Heart left ventricle (tissue), 16 donors: ENCODE measurements at regions of chr7 and their contacts with region 1.

Region 1: DNA sequence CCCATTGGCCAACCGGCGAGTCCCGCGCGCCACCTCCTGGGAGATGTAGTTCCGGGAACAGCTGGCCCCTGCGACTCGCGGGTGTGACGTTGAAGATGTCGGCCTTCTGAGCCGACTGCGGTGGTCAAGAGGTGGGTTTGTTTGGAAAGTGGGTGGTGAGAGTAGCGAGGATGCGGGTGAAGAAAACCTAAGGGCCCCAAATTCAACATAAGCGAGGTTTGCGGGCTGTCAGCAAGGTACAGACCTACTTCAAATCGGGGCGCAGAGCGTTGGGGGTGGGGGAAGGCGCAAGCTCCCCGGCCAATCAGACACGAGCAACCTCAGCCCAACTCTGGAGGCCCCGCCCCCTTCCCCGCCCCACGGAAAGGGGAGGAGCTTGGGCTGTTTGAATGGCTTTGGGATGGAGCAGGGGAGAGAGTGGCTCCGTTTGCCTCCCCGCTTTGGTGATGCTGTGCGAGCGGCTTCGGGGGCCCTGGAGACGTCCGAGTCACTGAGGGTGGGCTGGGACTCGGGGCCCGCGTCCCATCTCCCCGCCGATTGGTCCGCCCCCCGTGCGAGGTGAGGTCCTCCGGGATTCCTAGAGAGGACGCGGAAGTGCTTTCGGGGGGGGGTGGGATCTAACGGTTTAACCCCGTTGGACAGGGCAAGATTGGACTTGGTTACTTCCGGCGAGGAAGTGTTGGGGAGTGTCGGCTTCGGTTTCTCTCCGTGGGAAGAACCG is at the start of gene ZKSCAN5:
- DNase-seq: peak; percentile 99
- ATAC-seq: peak; percentile 93 to 96 (median 96)
- H3K4me3 ChIP-seq: peak within 1 kb of the TSS; percentile 65 to 91 (median 76)
- H3K27ac ChIP-seq: peak within 1 kb of the TSS; percentile 73 to 97 (median 94)
- H3K4me1 ChIP-seq: peaks cover 0 to 42% (median 33%) of the 10 kb centered on the region in 12 donors
- H3K27me3 ChIP-seq: no peaks in the 10 kb centered on the region
- CTCF ChIP-seq: peak in 4 of 12 donors; percentile 7 to 36 (median 16)
- POLR2A ChIP-seq: peak in 1 of 2 donors; percentile 56
- total RNA-seq, gene ZKSCAN5: 5.6 to 9.6 (median 7.1) TPM

Region 2: DNA sequence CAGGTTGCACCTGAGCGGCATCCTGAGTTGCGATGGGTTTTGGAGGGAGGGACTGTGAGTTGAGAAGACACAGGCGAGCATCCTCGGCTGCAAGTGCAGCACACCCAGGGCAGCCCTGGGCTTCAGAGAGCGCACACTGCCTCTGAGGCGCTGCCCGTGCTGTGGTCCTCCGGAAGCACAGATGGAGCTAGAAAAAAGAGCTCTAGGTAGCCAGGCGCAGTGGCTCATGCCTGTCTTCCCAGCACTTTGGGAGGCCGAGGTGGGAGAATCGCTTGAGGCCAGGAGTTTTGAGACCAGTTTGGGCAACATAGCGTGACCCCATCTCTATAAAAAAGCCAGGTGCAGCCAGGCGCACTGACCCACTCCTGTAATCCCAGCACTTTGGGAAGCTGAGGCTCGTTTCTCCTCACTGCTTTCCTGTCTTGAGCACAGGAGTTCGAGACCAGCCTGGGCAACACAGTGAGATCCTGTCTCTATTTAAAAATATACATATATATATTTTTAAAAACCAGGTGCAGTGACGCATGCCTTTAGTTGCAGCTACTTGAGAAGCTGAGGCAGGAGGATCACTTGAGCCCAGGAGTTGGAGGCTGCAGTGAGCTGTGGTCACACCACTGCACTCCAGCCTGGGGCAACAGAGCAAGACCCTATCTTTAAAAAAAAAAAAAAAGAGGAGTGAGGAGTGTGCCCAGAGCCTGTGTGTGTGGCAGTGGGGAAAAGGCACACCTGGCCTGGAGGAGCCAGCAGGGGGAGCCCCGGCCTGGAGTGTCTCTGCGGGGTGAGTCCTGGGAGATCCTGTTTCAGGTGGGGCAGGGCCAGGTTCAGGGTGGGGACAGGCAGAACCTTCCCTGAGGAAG is 139.6 kb before region 1 on chr7:
- intact Hi-C with region 1: no loop called
- DNase-seq: peak in 1 of 5 donors; percentile 48
- ATAC-seq: peak in 3 of 4 donors; percentile 63 to 66 (median 63)
- H3K4me3 ChIP-seq: no peak overlapping the region
- H3K27ac ChIP-seq: no peak overlapping the region
- H3K4me1 ChIP-seq: no peaks in the 10 kb centered on the region
- H3K27me3 ChIP-seq: no peaks in the 10 kb centered on the region
- CTCF ChIP-seq: peak in 11 of 12 donors; percentile 33 to 61 (median 53)
- POLR2A ChIP-seq: no peak

Region 3: DNA sequence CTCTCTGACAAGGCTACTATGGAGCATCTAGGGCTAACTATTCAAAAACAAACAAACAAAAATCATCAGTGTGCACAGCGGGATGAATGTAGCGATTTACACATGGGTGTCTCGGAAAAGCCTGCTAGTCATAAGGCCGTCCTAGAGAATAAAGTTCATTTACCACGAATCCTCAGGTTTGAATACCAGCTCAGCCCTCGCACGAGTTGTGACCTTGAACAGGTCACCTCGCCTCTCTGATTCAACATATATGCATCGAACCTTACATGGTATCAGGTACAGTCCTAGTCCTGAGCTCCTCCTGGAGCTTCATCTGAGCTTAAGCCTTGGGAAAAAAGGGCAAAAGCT is 39.4 kb before region 1 on chr7:
- intact Hi-C with region 1: loop called in 1 of 10 experiments (anchors 5 kb)
- DNase-seq: no peak
- ATAC-seq: peak in 2 of 4 donors; percentile 4 to 25
- H3K4me3 ChIP-seq: peak overlapping the region; percentile 64 to 96 (median 82)
- H3K27ac ChIP-seq: peak overlapping the region; percentile 77 to 96 (median 92)
- H3K4me1 ChIP-seq: peaks cover 8 to 58% (median 29%) of the 10 kb centered on the region in 12 donors
- H3K27me3 ChIP-seq: no peaks in the 10 kb centered on the region
- CTCF ChIP-seq: no peak
- POLR2A ChIP-seq: no peak

Region 4: GRCh38 chr7:99472561-99473243 is 32.1 kb before region 1 on chr7 and contains the start of gene ZNF789:
- intact Hi-C with region 1: loop called in 3 of 10 experiments (anchors 1 to 5 kb)
- DNase-seq: peak; percentile 98 to 99 (median 99)
- ATAC-seq: peak; percentile 98 to 99 (median 98)
- H3K4me3 ChIP-seq: peak within 1 kb of the TSS; percentile 63 to 96 (median 82)
- H3K27ac ChIP-seq: peak within 1 kb of the TSS; percentile 69 to 95 (median 86)
- H3K4me1 ChIP-seq: peaks cover 0 to 25% (median 10%) of the 10 kb centered on the region in 12 donors
- H3K27me3 ChIP-seq: no peaks in the 10 kb centered on the region
- CTCF ChIP-seq: peak in 1 of 12 donors; percentile 12
- POLR2A ChIP-seq: peak in 1 of 2 donors; percentile 59
- total RNA-seq, gene ZNF789: 2.1 to 5.2 (median 3.2) TPM

Region 5: DNA sequence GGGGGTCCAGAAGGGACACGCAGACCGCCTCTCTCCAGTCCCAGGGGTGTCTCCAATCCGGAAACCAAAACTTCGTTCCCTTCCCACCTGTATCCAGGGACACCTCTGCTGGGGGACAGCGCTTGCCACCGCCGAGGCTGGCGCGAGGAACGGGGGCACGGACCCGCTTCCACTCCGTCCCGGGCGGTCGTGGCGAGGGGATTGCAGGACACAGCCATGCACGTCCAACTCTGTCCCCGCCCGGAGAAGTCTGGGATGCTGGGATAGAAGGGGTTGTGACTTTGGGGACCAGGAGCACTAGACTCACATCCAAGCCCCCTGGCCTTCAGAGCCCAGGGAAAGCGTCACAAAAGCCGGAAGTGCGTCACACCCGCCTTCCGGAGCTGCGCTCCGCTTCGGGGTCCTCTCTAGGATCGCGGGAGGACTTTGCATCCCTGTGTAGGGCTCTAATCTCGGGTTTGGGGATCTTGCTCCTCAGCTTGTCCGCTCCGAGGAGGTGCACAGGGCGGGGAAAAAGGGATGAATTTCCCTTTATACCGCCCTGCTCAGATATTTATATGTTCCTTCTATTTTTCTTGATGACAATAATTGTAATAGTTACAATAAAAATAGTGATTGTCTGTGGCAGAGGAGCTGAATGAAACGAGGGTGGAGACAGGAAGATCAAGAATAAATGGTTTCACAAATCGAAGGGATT is 47.2 kb after region 1 on chr7 and contains the start of gene FAM200A:
- intact Hi-C with region 1: loop called in 8 of 10 experiments (anchors 5 to 10 kb)
- DNase-seq: peak; percentile 91 to 94 (median 93)
- ATAC-seq: peak; percentile 98 to 100 (median 98)
- H3K4me3 ChIP-seq: peak within 1 kb of the TSS; percentile 54 to 99 (median 83)
- H3K27ac ChIP-seq: peak within 1 kb of the TSS; percentile 6 to 95 (median 86)
- H3K4me1 ChIP-seq: peaks cover 0 to 26% (median 15%) of the 10 kb centered on the region in 12 donors
- H3K27me3 ChIP-seq: no peaks in the 10 kb centered on the region
- CTCF ChIP-seq: no peak
- POLR2A ChIP-seq: peak in 1 of 2 donors; percentile 72
- total RNA-seq, gene FAM200A: 4.7 to 7.1 (median 5.3) TPM

Region 6: GRCh38 chr7:99558306-99559174 is 53.8 kb after region 1 on chr7 and contains the start of gene ZNF655:
- intact Hi-C with region 1: loop called in 8 of 10 experiments (anchors 5 to 10 kb)
- DNase-seq: peak; percentile 93 to 95 (median 94)
- ATAC-seq: peak; percentile 96 to 98 (median 98)
- H3K4me3 ChIP-seq: peak within 1 kb of the TSS; percentile 58 to 99 (median 88)
- H3K27ac ChIP-seq: peak within 1 kb of the TSS; percentile 91 to 99 (median 96)
- H3K4me1 ChIP-seq: peaks cover 0 to 46% (median 23%) of the 10 kb centered on the region in 12 donors
- H3K27me3 ChIP-seq: no peaks in the 10 kb centered on the region
- CTCF ChIP-seq: peak in 2 of 12 donors; percentile 2 to 6
- POLR2A ChIP-seq: peak in 1 of 2 donors; percentile 70
- total RNA-seq, gene ZNF655: 26.8 to 48.0 (median 32.8) TPM

Region 7: DNA sequence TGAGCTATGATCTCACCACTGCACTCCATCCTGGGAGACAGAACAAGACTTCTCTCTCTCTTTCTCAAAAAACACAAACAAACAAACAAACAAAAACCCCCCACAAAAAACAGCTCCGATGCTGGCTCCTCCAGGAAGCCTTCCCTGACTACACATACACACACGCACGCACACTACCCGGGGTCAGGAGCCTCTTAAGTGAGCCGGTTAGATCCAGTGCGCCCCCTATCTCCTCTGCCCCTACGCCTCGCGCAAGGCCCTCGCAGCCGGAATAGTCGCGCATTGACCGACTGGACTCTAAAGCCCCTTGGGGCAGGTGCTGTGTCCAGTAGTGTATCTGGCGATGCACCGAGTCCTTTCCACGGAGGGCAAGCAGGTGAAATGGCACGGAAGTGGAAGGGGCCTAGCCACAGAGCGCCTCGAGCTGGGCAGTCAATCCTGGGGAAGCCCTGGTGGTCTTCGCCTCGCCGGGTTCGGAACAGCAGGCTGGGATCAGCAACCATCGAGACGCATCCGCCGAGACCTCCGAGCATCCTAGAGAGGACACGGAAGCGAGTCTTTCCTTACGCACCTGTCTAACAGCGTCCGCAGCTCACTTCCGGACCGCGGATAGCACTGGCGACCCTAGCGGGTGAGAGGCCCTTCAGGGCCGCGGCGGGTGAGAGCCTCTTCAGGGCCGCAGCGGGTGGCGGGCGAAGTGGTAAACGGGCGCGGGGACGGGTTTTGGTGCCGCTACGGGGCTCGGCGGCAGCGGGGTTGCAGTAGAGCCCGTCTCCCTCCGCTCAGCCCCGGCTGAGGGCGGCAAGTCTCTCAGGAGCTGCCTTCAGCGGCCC is 111.8 kb after region 1 on chr7 and contains the start of gene ZSCAN25:
- intact Hi-C with region 1: loop called in 1 of 10 experiments (anchors 10 kb)
- DNase-seq: peak; percentile 83 to 93 (median 93)
- ATAC-seq: peak; percentile 98
- H3K4me3 ChIP-seq: peak within 1 kb of the TSS; percentile 74 to 99 (median 95)
- H3K27ac ChIP-seq: peak within 1 kb of the TSS; percentile 43 to 93 (median 86)
- H3K4me1 ChIP-seq: peaks cover 0 to 17% (median 11%) of the 10 kb centered on the region in 12 donors
- H3K27me3 ChIP-seq: no peaks in the 10 kb centered on the region
- CTCF ChIP-seq: peak in 11 of 12 donors; percentile 12 to 48 (median 43)
- POLR2A ChIP-seq: peak in 1 of 2 donors; percentile 78
- total RNA-seq, gene ZSCAN25: 5.6 to 12.0 (median 8.3) TPM